ENCODE measurements at regions of chr1 and their contacts with region 1.

Region 1: GRCh38 chr1:109532365-109533136 is 7.1 kb upstream of the GPR61 start:
- DNase-seq: peak; percentile 96
- H3K4me3 Mint-ChIP-seq: peak overlapping the region; percentile 57
- H3K27ac Mint-ChIP-seq: peak overlapping the region; percentile 81
- H3K4me1 Mint-ChIP-seq: peaks cover 22% of the 10 kb centered on the region
- H3K27me3 Mint-ChIP-seq: no peaks in the 10 kb centered on the region

Region 2: DNA sequence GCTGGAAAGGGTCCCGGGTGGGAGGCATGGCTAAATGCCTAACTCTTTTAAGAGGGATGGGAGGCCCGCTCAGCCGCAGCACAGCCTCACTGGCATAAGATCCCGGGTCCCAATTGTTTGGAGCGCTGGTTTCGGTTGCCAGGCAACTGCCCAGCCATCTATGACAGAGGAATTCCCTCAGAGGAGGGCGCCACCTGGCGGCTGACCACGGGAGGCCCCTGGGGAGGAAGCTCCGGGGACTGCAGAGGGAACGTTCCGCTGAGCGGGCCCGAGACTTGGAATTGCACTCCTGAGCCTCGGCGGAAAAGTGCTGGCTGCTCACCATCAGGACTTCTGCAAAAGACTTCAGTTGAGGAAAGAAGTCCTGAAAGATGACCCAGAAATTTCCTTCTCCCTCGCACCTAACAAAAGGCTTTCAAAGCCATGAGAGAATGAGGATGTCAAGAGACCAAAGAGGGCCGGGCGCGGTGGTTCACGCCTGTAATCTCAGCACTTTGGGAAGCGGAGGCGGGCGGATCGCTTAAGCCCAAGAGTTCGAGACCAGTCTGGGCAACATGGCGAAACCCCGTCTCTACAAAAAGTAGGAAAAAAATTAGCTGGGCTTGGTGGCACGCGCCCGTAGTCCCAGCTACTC is 419.8 kb before region 1 on chr1:
- CTCF ChIA-PET with region 1: no interaction called
- intact Hi-C with region 1: loop called (anchors 5 kb)
- DNase-seq: peak; percentile 93
- H3K4me3 Mint-ChIP-seq: peak overlapping the region; percentile 80
- H3K27ac Mint-ChIP-seq: no peak overlapping the region
- H3K4me1 Mint-ChIP-seq: peaks cover 40% of the 10 kb centered on the region
- H3K27me3 Mint-ChIP-seq: peaks cover 4% of the 10 kb centered on the region

Region 3: DNA sequence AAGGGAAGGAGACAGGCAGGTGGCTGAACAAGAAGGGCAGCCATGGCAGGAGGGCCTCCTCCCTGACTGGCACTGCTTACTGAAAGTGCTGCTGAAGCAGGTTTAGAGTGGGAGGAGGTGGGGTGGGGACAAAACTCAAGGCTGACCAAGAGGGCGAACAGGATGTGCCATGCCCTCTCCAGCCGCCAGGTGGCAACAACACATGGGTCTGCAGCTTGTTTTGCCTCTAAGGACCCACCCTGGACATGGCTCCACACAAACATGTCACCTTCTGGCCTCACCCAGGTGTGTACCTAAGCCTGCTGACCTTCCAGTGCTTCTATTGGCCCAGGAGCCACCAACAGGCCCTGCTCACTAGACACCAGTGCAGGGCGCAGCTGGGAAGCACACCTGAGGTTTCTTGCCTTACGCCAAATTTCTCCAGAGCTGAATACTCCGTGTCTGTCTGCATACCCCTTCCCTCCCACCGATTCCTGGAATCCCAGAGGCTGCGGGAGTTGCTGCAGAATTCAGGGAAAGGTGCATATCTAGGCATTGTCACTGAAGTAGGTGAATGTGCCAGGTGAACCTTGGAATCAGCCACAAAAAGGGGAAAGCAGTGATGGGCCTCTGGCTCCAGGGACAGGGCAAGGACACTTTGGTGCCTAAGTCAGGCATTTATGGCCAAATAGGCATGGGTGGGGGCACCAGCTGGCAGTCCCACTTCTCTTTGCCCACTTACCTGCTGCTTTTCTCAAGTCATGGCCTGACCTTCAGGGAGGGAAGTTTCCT is 254.9 kb before region 1 on chr1:
- CTCF ChIA-PET with region 1: interaction called, 42 read pairs
- intact Hi-C with region 1: loop called (anchors 1 kb)
- DNase-seq: peak; percentile 73
- H3K4me3 Mint-ChIP-seq: no peak overlapping the region
- H3K27ac Mint-ChIP-seq: no peak overlapping the region
- H3K4me1 Mint-ChIP-seq: peaks cover 4% of the 10 kb centered on the region
- H3K27me3 Mint-ChIP-seq: no peaks in the 10 kb centered on the region

Region 4: GRCh38 chr1:109412551-109412950 is 120.0 kb before region 1 on chr1:
- CTCF ChIA-PET with region 1: interaction called, 20 read pairs
- intact Hi-C with region 1: no loop called
- DNase-seq: no peak
- H3K4me3 Mint-ChIP-seq: no peak overlapping the region
- H3K27ac Mint-ChIP-seq: no peak overlapping the region
- H3K4me1 Mint-ChIP-seq: peaks cover 29% of the 10 kb centered on the region
- H3K27me3 Mint-ChIP-seq: no peaks in the 10 kb centered on the region

Region 5: GRCh38 chr1:109499661-109500536 is 32.7 kb before region 1 on chr1:
- CTCF ChIA-PET with region 1: interaction called, 1,207 read pairs
- intact Hi-C with region 1: loop called (anchors 1 kb)
- DNase-seq: peak; percentile 73
- H3K4me3 Mint-ChIP-seq: no peak overlapping the region
- H3K27ac Mint-ChIP-seq: peak overlapping the region; percentile 81
- H3K4me1 Mint-ChIP-seq: peaks cover 91% of the 10 kb centered on the region
- H3K27me3 Mint-ChIP-seq: no peaks in the 10 kb centered on the region

Region 6: GRCh38 chr1:109595531-109595930 is 63.0 kb after region 1 on chr1:
- CTCF ChIA-PET with region 1: no interaction called
- intact Hi-C with region 1: no loop called
- DNase-seq: no peak
- H3K4me3 Mint-ChIP-seq: no peak overlapping the region
- H3K27ac Mint-ChIP-seq: no peak overlapping the region
- H3K4me1 Mint-ChIP-seq: peaks cover 2% of the 10 kb centered on the region
- H3K27me3 Mint-ChIP-seq: no peaks in the 10 kb centered on the region